Dorsolateral prefrontal cortex (tissue), 120 donors: ENCODE measurements at regions of chr12 and their contacts with region 1.

Region 1: DNA sequence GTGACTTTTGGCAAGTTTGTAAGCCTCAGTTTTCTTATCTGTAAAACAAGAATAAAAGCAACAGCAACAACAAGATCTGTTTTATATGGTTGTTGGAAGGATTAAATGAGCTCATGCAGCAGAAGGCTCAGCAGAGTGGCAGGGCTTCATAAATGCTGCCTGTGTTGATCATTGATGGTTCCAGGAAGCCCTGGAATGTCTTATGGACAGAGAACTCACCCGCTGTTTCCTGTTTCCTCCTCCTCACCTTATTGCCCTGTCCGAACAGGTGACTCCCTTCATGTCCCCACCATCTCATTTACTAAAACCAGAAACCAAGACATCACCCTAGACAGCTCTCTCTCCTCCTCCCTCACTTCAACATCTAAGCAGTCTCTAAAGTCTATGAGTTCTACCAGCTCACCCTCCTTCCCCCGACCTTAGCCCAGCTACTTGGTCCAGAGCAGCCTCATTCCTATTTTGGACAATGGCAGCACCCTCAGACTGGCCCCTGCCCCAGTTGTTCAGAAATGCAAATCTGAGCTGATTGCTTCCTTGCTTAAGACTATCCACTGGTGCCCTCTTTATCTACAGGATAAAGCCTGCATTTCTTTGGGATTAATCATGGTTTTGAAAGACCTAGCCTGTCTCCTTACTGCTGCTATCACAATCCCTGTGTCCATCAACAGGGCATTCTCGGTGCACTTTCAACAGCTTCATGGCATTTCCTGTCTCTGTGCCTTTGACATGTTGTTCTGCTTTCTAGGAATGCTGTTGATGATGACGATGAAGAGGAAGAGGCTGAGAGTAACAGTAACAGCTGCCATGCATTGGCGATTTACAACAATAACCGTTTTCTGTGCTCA is 21.4 kb upstream of the GSG1 start:
- DNase-seq: no peak
- H3K4me3 ChIP-seq: no peak overlapping the region
- H3K27ac ChIP-seq: no peak overlapping the region
- H3K27me3 ChIP-seq: no peaks in the 10 kb centered on the region
- CTCF ChIP-seq: no peak

Region 2: DNA sequence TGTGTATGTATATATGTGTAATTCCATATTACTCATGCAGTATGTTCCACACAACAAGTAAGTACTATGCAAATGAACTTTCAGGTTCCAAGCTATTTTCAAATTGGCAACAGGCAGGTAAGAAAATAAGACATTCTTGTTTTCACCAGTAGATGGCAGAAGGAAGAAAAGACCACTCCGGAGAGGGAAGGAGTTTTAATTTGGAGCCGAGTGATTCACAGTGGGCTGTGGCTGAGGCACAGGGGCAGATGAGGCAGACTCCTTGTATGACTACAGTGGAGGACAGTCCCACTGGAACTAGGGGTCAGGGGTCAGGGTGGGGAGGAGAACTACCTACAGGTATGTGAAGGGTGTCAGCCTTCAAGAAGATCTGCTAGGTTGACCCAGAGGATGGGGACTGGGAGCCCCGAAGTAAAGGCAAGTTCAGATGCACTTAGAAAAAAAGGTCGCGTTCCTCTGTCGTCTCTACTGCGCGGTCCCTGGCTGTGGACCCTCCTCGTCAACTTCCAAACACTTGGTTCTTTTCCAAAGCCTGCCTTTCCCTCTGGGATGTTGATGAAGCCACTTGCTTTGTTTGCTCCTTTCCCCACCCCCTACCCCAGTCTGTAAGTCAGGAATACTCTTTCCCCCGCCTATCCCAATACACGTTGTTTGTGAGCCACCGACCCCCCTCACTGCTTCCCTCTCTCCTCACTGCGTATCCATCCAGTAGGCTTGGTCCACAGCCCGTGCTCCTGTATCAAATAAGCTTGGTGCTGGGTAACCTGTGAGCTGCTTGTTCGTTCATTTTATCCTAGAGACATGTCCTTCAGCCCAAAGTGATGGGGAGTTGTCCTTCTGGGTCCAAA is 287.6 kb before region 1 on chr12:
- intact Hi-C with region 1: no loop called
- DNase-seq: peak in 2 of 10 donors; percentile 4 to 7
- H3K4me3 ChIP-seq: no peak overlapping the region
- H3K27ac ChIP-seq: no peak overlapping the region
- H3K27me3 ChIP-seq: no peaks in the 10 kb centered on the region
- CTCF ChIP-seq: peak in 54 of 56 donors; percentile 25 to 66 (median 50)

Region 3: GRCh38 chr12:12890815-12891645 is 233.9 kb before region 1 on chr12 and contains the start of gene GPRC5A:
- intact Hi-C with region 1: no loop called
- DNase-seq: peak in 3 of 10 donors; percentile 44 to 49 (median 46)
- H3K4me3 ChIP-seq: peak within 1 kb of the TSS; percentile 32 to 78 (median 60)
- H3K27ac ChIP-seq: peak within 1 kb of the TSS in 9 of 59 donors; percentile 9 to 79 (median 57)
- H3K27me3 ChIP-seq: peaks cover 0 to 28% (median 6%) of the 10 kb centered on the region in 45 donors
- CTCF ChIP-seq: peak in 3 of 56 donors; percentile 6 to 15 (median 11)
- total RNA-seq, gene GPRC5A: 0.07 to 26.8 (median 0.88) TPM in 118 of 120 experiments, not detected in the others

Region 4: GRCh38 chr12:13187399-13187798 is 62.5 kb after region 1 on chr12:
- intact Hi-C with region 1: loop called in 1 of 2 experiments (anchors 5 kb)
- DNase-seq: no peak
- H3K4me3 ChIP-seq: no peak overlapping the region
- H3K27ac ChIP-seq: no peak overlapping the region
- H3K27me3 ChIP-seq: no peaks in the 10 kb centered on the region
- CTCF ChIP-seq: no peak